ENCODE measurements at regions of chr16 and their contacts with region 1.

Region 1: GRCh38 chr16:23595951-23596720 is at the start of gene NDUFAB1:
- DNase-seq: peak; percentile 96
- ATAC-seq: peak; percentile 97
- H3K4me3 Mint-ChIP-seq: peak within 1 kb of the TSS; percentile 79
- H3K27ac Mint-ChIP-seq: peak within 1 kb of the TSS; percentile 80
- H3K4me1 Mint-ChIP-seq: peaks cover 36% of the 10 kb centered on the region
- H3K27me3 Mint-ChIP-seq: no peaks in the 10 kb centered on the region
- total RNA-seq, gene NDUFAB1: 81.5 to 158 TPM

Region 2: GRCh38 chr16:21952793-21953540 is 1643.2 kb before region 1 on chr16 and contains the start of gene UQCRC2:
- CTCF ChIA-PET with region 1: no interaction called
- POLR2A ChIA-PET with region 1: no interaction called
- intact Hi-C with region 1: loop called in 1 of 2 experiments (anchors 5 kb)
- DNase-seq: peak; percentile 92
- ATAC-seq: peak; percentile 93
- H3K4me3 Mint-ChIP-seq: peak within 1 kb of the TSS; percentile 98
- H3K27ac Mint-ChIP-seq: peak within 1 kb of the TSS; percentile 100
- H3K4me1 Mint-ChIP-seq: peaks cover 58% of the 10 kb centered on the region
- H3K27me3 Mint-ChIP-seq: no peaks in the 10 kb centered on the region
- total RNA-seq, gene UQCRC2: 321 to 367 TPM

Region 3: DNA sequence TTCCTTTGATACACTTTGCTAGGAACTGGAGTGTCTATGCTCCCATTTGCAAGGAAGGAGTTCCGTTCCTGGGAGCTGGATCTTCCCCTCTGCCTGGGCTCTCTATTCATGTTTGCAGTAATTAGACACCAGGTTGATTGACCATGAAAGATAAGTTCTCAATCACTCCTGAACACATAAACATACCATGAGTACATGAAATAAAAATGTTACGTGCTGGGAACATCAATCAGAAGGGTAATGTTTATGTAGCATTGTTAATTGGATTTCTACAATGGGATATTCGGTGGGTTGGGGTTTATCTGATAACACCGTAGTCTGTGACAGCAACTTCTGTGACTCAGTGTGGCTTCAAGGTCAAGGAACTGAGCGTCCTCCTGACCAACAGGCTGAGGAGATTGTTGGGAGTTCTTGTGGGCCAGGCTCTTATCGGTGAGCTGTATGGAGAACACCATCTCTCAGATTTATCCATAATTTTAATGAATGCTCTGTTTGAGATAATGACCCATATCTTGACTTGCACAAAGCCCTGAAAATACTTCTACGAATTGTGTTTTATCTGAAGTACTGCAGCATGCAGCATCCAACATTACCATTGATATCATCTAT is 949.1 kb before region 1 on chr16:
- CTCF ChIA-PET with region 1: no interaction called
- POLR2A ChIA-PET with region 1: no interaction called
- intact Hi-C with region 1: no loop called
- DNase-seq: no peak
- ATAC-seq: no peak
- H3K4me3 Mint-ChIP-seq: no peak overlapping the region
- H3K27ac Mint-ChIP-seq: no peak overlapping the region
- H3K4me1 Mint-ChIP-seq: no peaks in the 10 kb centered on the region
- H3K27me3 Mint-ChIP-seq: peaks cover 5% of the 10 kb centered on the region

Region 4: DNA sequence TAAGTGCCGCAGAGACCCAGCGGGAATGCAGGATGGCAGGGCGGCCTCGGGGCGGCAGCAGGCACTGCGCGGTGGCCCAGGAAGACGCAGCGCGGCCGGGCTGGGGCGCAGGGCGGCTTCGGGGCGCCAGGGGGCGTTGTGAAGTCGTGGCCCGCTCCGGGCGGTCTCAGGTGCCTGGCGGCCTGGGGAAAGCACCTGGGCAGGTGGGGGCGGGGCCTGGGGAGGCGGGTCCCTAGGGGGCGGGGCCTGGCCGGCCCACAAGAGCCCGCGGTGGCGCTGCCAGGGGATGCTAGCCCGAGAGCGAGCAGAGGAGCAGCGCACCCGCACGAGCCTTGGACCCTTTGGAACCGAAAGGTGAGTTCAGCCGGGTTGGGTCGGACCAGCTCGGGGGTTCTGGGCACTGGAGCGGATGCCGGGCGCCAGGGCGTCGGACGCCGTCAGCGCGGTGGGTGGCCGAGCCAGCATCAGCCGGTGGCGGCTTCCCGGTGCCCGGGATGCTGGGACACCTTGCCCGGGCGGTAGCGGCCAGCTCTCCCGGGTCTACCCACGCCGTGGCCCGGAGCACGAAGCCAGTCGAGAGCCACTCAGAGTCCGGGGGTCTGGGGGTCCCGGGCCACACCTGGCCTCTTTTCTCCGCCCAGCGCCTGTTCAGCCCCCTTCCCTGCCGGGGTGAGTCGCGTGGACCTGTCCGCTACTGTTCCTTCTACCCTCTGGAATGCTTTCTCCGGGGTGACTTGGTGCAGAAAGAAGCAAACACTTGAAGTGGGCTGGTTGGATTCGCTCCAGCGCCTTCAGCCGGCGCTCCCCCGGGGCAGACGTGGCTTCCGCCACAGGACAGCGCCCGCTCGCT is 413.5 kb before region 1 on chr16 and contains the start of gene SCNN1G:
- CTCF ChIA-PET with region 1: no interaction called
- POLR2A ChIA-PET with region 1: no interaction called
- intact Hi-C with region 1: loop called in 1 of 2 experiments (anchors 1 kb)
- DNase-seq: peak; percentile 90
- ATAC-seq: peak; percentile 99
- H3K4me3 Mint-ChIP-seq: peak within 1 kb of the TSS; percentile 45
- H3K27ac Mint-ChIP-seq: no peak within 1 kb of the TSS
- H3K4me1 Mint-ChIP-seq: peaks cover 8% of the 10 kb centered on the region
- H3K27me3 Mint-ChIP-seq: peaks cover 51% of the 10 kb centered on the region
- total RNA-seq, gene SCNN1G: not detected

Region 5: DNA sequence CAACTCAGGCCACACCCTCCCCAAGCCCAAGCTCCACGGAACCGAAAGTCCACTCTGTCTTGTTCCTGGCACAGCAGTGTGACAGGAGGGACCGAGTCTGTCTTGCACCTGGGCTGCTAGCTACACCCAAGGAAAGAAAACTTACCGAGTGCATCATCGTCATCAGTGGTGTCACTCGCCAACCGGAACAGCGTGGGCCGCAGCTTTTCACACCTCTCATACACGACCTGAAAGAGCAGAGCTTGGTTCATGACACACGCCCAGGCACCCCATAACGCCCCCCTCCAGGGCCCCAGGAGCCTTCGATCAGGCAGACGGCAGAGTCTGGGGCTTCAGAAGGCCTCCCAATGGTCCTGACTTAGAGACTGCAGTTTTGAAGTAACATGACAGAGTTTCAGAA is 113.4 kb before region 1 on chr16:
- CTCF ChIA-PET with region 1: no interaction called
- POLR2A ChIA-PET with region 1: no interaction called
- intact Hi-C with region 1: no loop called
- DNase-seq: peak; percentile 19
- ATAC-seq: no peak
- H3K4me3 Mint-ChIP-seq: no peak overlapping the region
- H3K27ac Mint-ChIP-seq: no peak overlapping the region
- H3K4me1 Mint-ChIP-seq: no peaks in the 10 kb centered on the region
- H3K27me3 Mint-ChIP-seq: no peaks in the 10 kb centered on the region

Region 6: DNA sequence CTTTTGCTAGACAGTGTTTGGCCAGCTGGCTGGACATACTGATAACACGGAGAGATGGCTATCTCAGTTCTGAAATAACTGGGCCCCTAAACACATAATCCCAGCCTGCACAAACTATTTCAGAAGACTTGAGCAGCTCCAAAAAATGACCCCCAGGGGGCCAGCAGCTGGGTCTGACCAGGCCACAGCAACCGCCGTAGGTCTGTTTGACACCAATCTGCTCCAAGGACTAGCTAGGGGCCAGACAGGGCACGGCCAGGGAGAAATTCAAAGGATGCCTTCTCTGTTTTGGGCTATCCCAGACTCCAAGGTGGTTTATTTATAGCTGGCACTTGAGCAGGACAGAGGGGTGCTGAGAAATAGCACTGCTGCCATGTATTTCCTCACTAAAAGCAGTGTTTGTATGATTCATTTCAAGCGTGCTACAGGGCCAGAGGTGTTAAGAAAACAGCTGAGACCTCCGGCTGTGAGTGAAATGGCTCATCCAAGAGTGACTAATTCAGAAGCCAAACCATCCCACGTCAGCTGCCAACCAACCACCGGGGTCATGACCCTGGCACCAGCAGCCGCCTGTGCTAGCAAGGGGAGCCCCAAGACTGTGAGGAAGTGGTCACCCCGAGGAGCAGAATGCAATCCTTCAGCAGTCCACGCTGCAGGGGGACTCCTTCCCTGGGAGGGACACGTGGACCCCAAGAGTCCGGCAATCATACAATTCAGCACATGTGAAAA is 91.5 kb before region 1 on chr16:
- CTCF ChIA-PET with region 1: interaction called, 5 read pairs
- POLR2A ChIA-PET with region 1: no interaction called
- intact Hi-C with region 1: loop called (anchors 1 to 2 kb)
- DNase-seq: peak; percentile 92
- ATAC-seq: peak; percentile 94
- H3K4me3 Mint-ChIP-seq: peak overlapping the region; percentile 26
- H3K27ac Mint-ChIP-seq: peak overlapping the region; percentile 83
- H3K4me1 Mint-ChIP-seq: peaks cover 77% of the 10 kb centered on the region
- H3K27me3 Mint-ChIP-seq: no peaks in the 10 kb centered on the region

Region 7: DNA sequence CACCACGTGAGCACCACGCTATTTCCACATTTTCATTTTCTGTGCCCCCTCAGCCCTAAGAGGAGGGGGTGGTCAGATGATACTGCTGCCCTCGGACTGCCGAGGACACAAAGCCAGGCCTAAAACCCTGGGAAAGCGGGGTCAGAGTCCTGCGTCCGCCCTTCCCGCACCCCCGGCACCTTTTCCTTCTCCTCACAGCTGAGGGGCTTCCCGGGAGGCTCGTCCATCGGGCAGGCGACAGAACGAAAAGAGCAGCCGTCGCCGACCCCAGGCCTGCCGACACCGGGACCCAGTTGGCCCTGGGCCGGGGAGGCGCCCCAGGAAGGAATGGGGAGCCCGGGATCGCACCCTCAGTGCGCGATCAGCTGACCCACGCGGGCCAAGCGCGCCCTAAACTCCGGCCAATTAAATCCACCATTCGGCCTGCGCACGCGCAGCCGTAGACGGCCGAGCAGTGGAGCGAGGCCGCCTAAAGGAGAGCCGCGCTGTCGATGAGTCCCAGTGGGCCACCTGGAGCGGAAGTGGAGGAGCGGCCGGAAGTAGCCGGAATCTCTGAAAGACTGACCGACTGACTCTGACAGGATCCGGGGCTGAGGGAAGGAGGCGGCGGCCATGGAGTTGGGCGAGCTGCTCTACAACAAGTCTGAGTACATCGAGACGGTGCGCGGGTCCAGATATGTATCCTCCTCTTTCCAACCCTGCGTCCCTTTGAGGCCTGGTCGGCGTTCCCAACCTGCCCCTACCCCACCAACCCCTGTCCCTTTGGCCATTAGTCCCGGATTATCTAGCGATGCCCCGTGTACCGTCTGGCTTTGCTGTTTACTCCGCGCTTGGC is 45.0 kb after region 1 on chr16 and contains the starts of genes DCTN5 and PALB2:
- CTCF ChIA-PET with region 1: interaction called, 4 read pairs
- POLR2A ChIA-PET with region 1: no interaction called
- intact Hi-C with region 1: loop called in 1 of 2 experiments (anchors 1 kb)
- DNase-seq: peak; percentile 93
- ATAC-seq: peak; percentile 98
- H3K4me3 Mint-ChIP-seq: peak within 1 kb of the TSS; percentile 100
- H3K27ac Mint-ChIP-seq: peak within 1 kb of the TSS; percentile 96
- H3K4me1 Mint-ChIP-seq: peaks cover 34% of the 10 kb centered on the region
- H3K27me3 Mint-ChIP-seq: no peaks in the 10 kb centered on the region
- total RNA-seq, gene DCTN5: 47.1 to 55.8 TPM
- total RNA-seq, gene PALB2: 23.1 to 23.5 TPM

Region 8: GRCh38 chr16:23924128-23924527 is 328.0 kb after region 1 on chr16:
- CTCF ChIA-PET with region 1: no interaction called
- POLR2A ChIA-PET with region 1: no interaction called
- intact Hi-C with region 1: no loop called
- DNase-seq: peak; percentile 30
- ATAC-seq: peak; percentile 66
- H3K4me3 Mint-ChIP-seq: no peak overlapping the region
- H3K27ac Mint-ChIP-seq: peak overlapping the region; percentile 40
- H3K4me1 Mint-ChIP-seq: peaks cover 58% of the 10 kb centered on the region
- H3K27me3 Mint-ChIP-seq: no peaks in the 10 kb centered on the region

Region 9: DNA sequence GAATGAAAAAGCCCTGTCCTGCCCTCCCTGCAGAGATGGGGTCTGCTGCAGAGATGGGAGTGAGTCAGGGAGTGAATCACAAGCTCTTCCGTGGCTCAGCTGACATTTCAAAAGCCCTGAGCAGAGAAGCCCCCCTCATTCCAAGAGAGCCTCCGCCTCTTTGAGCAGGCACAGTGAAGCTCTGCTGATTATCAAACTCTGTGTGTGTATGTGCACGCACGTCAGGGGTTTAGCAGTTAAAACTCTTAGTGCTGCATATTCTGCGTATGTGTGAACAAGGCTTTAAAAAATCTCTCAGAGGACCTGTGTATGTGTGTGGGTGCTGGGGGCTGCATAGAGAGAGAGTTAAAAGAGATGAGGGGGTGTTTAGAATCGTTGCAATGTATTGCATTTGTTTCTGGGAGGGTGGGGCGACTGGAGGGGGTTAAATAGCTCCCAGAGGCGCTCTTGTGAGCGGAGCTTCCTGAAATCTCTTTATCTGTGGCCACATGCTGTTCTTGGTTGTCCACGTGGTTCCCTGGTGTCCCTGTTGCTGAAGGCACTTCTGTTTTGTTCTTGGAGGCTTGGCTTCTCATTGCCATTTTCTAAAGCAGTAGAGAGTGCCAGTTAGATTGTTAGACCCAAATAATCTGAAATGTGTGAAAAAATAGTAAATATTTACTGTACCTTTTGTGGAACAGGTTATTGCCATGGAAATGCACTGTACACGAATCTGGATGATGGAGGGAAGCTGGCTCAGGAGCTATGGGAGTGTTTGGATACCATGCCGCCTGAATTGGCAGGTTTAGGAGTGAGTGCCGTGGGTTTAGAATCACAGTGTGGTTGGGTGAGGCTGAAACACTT is 356.2 kb after region 1 on chr16:
- CTCF ChIA-PET with region 1: no interaction called
- POLR2A ChIA-PET with region 1: no interaction called
- intact Hi-C with region 1: loop called in 1 of 2 experiments (anchors 5 kb)
- DNase-seq: peak; percentile 67
- ATAC-seq: peak; percentile 75
- H3K4me3 Mint-ChIP-seq: peak overlapping the region; percentile 13
- H3K27ac Mint-ChIP-seq: peak overlapping the region; percentile 84
- H3K4me1 Mint-ChIP-seq: peaks cover 82% of the 10 kb centered on the region
- H3K27me3 Mint-ChIP-seq: no peaks in the 10 kb centered on the region